ENCODE measurements at regions of chr3 and their contacts with region 1.

Region 1: GRCh38 chr3:152128356-152128755 is 140.4 kb upstream of the MBNL1 start:
- DNase-seq: no peak
- ATAC-seq: no peak
- H3K4me3 ChIP-seq: no peak overlapping the region
- H3K4me3 Mint-ChIP-seq: no peak overlapping the region
- H3K27ac ChIP-seq: no peak overlapping the region
- H3K27ac Mint-ChIP-seq: no peak overlapping the region
- H3K4me1 ChIP-seq: no peaks in the 10 kb centered on the region
- H3K4me1 Mint-ChIP-seq: no peaks in the 10 kb centered on the region
- H3K27me3 ChIP-seq: no peaks in the 10 kb centered on the region
- H3K27me3 Mint-ChIP-seq: no peaks in the 10 kb centered on the region
- CTCF ChIP-seq: no peak

Region 2: DNA sequence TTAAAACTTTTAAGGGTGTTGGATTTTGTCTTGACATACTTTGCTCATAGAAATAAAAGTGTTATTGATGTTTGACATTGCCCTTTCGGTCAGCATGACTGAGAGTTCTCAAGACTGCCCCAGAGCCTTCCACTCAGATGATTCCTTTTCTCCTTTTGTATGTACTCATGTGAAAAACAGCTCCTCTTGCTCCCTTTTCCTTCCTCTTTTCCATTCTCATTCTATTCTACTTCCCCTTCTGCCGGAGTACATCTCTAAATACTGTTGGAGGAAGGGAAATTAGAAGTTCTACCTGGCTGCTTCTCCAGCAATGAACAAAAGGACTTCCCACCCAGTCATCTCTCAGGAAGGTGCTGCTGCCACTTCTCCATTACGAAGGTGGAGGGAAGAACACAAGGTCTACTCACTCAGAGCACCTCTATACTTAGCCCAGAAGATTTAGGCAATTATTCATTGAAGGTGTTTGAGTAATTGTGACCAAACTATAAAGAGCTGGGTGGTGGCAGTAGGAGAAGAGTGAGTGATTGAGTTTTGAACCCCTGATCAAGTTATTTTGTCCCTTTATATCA is 23.4 kb before region 1 on chr3:
- CTCF ChIA-PET with region 1: no interaction called
- POLR2A ChIA-PET with region 1: no interaction called
- intact Hi-C with region 1: loop called (anchors 2 kb)
- DNase-seq: no peak
- ATAC-seq: no peak
- H3K4me3 ChIP-seq: no peak overlapping the region
- H3K4me3 Mint-ChIP-seq: no peak overlapping the region
- H3K27ac ChIP-seq: no peak overlapping the region
- H3K27ac Mint-ChIP-seq: no peak overlapping the region
- H3K4me1 ChIP-seq: no peaks in the 10 kb centered on the region
- H3K4me1 Mint-ChIP-seq: peaks cover 7% of the 10 kb centered on the region
- H3K27me3 ChIP-seq: no peaks in the 10 kb centered on the region
- H3K27me3 Mint-ChIP-seq: no peaks in the 10 kb centered on the region
- CTCF ChIP-seq: no peak